ENCODE measurements at regions of chr19 and their contacts with region 1.

Region 1: GRCh38 chr19:57914531-57914930 is 1.9 kb downstream of the ZNF417 start:
- DNase-seq: no peak
- ATAC-seq: no peak
- H3K4me3 ChIP-seq: no peak overlapping the region
- H3K4me3 Mint-ChIP-seq: peak overlapping the region; percentile 92
- H3K27ac ChIP-seq: no peak overlapping the region
- H3K27ac Mint-ChIP-seq: peak overlapping the region; percentile 49
- H3K4me1 ChIP-seq: peaks cover 12% of the 10 kb centered on the region
- H3K4me1 Mint-ChIP-seq: peaks cover 43% of the 10 kb centered on the region
- H3K27me3 ChIP-seq: no peaks in the 10 kb centered on the region
- H3K27me3 Mint-ChIP-seq: no peaks in the 10 kb centered on the region
- CTCF ChIP-seq: no peak

Region 2: DNA sequence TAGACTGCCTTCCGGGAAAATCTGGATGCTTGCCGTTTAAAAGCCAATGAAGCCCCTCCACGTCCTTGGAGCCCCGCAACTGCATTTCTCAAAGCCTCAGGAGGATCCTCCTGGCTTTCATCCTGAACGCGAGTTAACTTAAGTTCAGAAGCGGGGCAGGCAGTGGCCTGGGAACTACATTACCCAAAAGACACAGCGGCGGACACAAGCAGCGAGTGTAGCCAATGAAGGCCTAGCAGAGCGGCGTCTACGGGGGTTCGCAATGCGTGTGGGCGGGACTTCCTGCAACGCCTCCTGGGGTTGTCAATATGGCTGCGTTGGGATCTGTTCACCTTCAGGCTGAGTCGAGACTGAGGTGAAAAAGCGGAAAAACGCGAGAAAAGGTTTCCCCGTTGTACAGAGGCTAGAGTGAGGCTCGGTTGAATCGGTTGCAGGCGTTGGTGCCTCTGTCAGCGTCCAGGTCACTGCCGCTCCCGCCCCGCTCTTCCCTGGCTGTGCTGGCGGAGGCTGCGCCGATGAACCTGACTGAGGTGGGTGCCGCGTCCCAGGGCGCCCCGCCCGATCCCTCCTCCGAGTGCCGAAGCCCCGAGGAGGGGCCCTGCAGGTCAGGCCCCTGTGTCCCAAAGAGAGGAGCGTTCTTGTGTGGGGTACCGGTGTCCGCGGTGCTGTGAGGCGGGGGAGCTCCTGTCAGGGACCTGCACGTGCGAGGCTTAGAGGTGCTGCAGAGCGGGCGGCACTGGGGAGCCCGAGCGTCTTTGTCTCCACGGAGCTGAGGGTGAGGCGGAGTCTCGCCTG is 503.5 kb before region 1 on chr19 and contains the start of gene ZNF17:
- CTCF ChIA-PET with region 1: interaction called, 3 read pairs
- POLR2A ChIA-PET with region 1: no interaction called
- intact Hi-C with region 1: loop called (anchors 1 to 10 kb)
- DNase-seq: peak; percentile 83 to 96 (median 91)
- ATAC-seq: peak; percentile 100
- H3K4me3 ChIP-seq: peak within 1 kb of the TSS; percentile 82 to 99
- H3K4me3 Mint-ChIP-seq: peak within 1 kb of the TSS; percentile 96
- H3K27ac ChIP-seq: peak within 1 kb of the TSS; percentile 67 to 83
- H3K27ac Mint-ChIP-seq: peak within 1 kb of the TSS; percentile 94
- H3K4me1 ChIP-seq: peaks cover 13% of the 10 kb centered on the region
- H3K4me1 Mint-ChIP-seq: peaks cover 35% of the 10 kb centered on the region
- H3K27me3 ChIP-seq: no peaks in the 10 kb centered on the region
- H3K27me3 Mint-ChIP-seq: no peaks in the 10 kb centered on the region
- CTCF ChIP-seq: no peak
- total RNA-seq, gene ZNF17: 15.5 to 18.3 TPM

Region 3: GRCh38 chr19:57769345-57770131 is 145.0 kb before region 1 on chr19 and contains the start of gene ZNF586:
- CTCF ChIA-PET with region 1: no interaction called
- POLR2A ChIA-PET with region 1: no interaction called
- intact Hi-C with region 1: loop called (anchors 1 kb)
- DNase-seq: peak; percentile 64 to 94 (median 86)
- ATAC-seq: peak; percentile 99
- H3K4me3 ChIP-seq: peak within 1 kb of the TSS; percentile 73 to 90
- H3K4me3 Mint-ChIP-seq: peak within 1 kb of the TSS; percentile 94
- H3K27ac ChIP-seq: peak within 1 kb of the TSS; percentile 61 to 86
- H3K27ac Mint-ChIP-seq: peak within 1 kb of the TSS; percentile 97
- H3K4me1 ChIP-seq: peaks cover 17% of the 10 kb centered on the region
- H3K4me1 Mint-ChIP-seq: peaks cover 35% of the 10 kb centered on the region
- H3K27me3 ChIP-seq: no peaks in the 10 kb centered on the region
- H3K27me3 Mint-ChIP-seq: no peaks in the 10 kb centered on the region
- CTCF ChIP-seq: no peak
- total RNA-seq, gene ZNF586: 54.0 to 57.6 TPM

Region 4: DNA sequence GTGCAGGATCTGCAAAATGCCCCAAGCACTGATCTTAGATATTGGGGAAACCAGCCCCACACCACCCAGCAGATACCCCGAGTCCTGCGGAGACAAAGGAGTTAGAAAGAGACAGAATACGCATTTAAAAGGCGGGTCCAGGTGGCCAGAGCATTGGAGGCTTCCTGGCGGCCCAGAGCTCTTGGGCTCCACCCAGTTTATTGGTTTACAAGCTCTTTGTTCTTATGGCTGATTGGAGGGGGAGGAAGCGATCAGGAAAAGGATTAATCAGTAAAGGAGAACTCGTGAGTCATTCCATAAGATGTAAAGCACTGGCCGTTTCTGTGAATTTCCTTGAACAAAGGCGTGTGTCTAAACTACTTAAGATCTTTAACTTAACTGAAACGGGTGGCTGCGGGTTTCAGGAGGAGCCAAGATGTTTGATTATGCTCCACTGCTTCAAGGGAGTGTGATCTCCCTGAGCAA is 63.9 kb before region 1 on chr19:
- CTCF ChIA-PET with region 1: no interaction called
- POLR2A ChIA-PET with region 1: interaction called, 3 read pairs
- intact Hi-C with region 1: loop called in 1 of 2 experiments (anchors 2 kb)
- DNase-seq: peak in 2 of 9 experiments; percentile 8 to 12
- ATAC-seq: no peak
- H3K4me3 ChIP-seq: peak overlapping the region; percentile 68 to 85
- H3K4me3 Mint-ChIP-seq: peak overlapping the region; percentile 93
- H3K27ac ChIP-seq: peak overlapping the region; percentile 78 to 82
- H3K27ac Mint-ChIP-seq: peak overlapping the region; percentile 96
- H3K4me1 ChIP-seq: peaks cover 16% of the 10 kb centered on the region
- H3K4me1 Mint-ChIP-seq: peaks cover 33% of the 10 kb centered on the region
- H3K27me3 ChIP-seq: no peaks in the 10 kb centered on the region
- H3K27me3 Mint-ChIP-seq: no peaks in the 10 kb centered on the region
- CTCF ChIP-seq: no peak

Region 5: GRCh38 chr19:57947208-57948134 is 32.9 kb after region 1 on chr19 and contains the start of gene ZNF256:
- CTCF ChIA-PET with region 1: no interaction called
- POLR2A ChIA-PET with region 1: no interaction called
- intact Hi-C with region 1: loop called in 1 of 2 experiments (anchors 2 kb)
- DNase-seq: peak; percentile 72 to 92 (median 86)
- ATAC-seq: peak; percentile 91
- H3K4me3 ChIP-seq: peak within 1 kb of the TSS; percentile 93 to 97
- H3K4me3 Mint-ChIP-seq: peak within 1 kb of the TSS; percentile 93
- H3K27ac ChIP-seq: peak within 1 kb of the TSS; percentile 76 to 90
- H3K27ac Mint-ChIP-seq: peak within 1 kb of the TSS; percentile 95
- H3K4me1 ChIP-seq: peaks cover 16% of the 10 kb centered on the region
- H3K4me1 Mint-ChIP-seq: peaks cover 20% of the 10 kb centered on the region
- H3K27me3 ChIP-seq: no peaks in the 10 kb centered on the region
- H3K27me3 Mint-ChIP-seq: no peaks in the 10 kb centered on the region
- CTCF ChIP-seq: peak; percentile 44
- total RNA-seq, gene ZNF256: 18.3 to 21.0 TPM

Region 6: DNA sequence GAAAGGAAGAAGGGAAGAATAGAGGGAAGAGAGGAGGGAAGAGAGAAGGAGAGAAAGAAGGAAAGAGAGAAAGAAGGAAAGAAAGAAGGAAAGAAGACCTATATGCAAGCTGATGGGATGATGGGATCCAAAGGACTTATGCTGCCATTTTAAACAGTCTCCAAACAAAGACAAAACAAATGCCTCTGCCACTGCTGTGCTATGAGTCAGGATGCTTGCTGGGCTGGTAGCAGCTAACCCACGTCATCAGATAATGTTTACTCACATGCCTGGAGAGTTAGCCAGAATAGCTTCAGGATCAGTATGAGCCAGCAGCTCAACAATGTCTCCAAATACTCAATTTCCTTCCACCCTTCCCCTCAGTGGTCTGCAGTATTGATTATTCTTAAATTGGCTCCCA is 256.3 kb after region 1 on chr19:
- CTCF ChIA-PET with region 1: no interaction called
- POLR2A ChIA-PET with region 1: no interaction called
- intact Hi-C with region 1: no loop called
- DNase-seq: no peak
- ATAC-seq: no peak
- H3K4me3 ChIP-seq: no peak overlapping the region
- H3K4me3 Mint-ChIP-seq: no peak overlapping the region
- H3K27ac ChIP-seq: no peak overlapping the region
- H3K27ac Mint-ChIP-seq: no peak overlapping the region
- H3K4me1 ChIP-seq: no peaks in the 10 kb centered on the region
- H3K4me1 Mint-ChIP-seq: no peaks in the 10 kb centered on the region
- H3K27me3 ChIP-seq: no peaks in the 10 kb centered on the region
- H3K27me3 Mint-ChIP-seq: peaks cover 2% of the 10 kb centered on the region
- CTCF ChIP-seq: no peak

Measured in CD8-positive, alpha-beta T cell (primary cell).